Activated CD8-positive, alpha-beta T cell treated with anti-CD3 and anti-CD28 coated beads for 36 hours (primary cell): ENCODE measurements at regions of chr3 and their contacts with region 1.

Region 1: GRCh38 chr3:194472290-194472920 is 14.4 kb downstream of the ATP13A3 start:
- DNase-seq: peak; percentile 40
- ATAC-seq: peak; percentile 93
- H3K4me3 Mint-ChIP-seq: no peak overlapping the region
- H3K27ac Mint-ChIP-seq: no peak overlapping the region
- H3K4me1 Mint-ChIP-seq: peaks cover 21% of the 10 kb centered on the region
- H3K27me3 Mint-ChIP-seq: no peaks in the 10 kb centered on the region
- CTCF ChIP-seq: peak; percentile 97

Region 2: GRCh38 chr3:194458131-194458530 is 14.3 kb before region 1 on chr3:
- CTCF ChIA-PET with region 1: interaction called, 51 read pairs
- POLR2A ChIA-PET with region 1: no interaction called
- intact Hi-C with region 1: no loop called
- DNase-seq: no peak
- ATAC-seq: no peak
- H3K4me3 Mint-ChIP-seq: no peak overlapping the region
- H3K27ac Mint-ChIP-seq: no peak overlapping the region
- H3K4me1 Mint-ChIP-seq: no peaks in the 10 kb centered on the region
- H3K27me3 Mint-ChIP-seq: no peaks in the 10 kb centered on the region
- CTCF ChIP-seq: peak; percentile 34

Region 3: GRCh38 chr3:194486540-194487288 is 14.3 kb after region 1 on chr3 and contains the start of gene ATP13A3:
- CTCF ChIA-PET with region 1: interaction called, 44 read pairs
- POLR2A ChIA-PET with region 1: interaction called, 6 read pairs
- intact Hi-C with region 1: no loop called
- DNase-seq: peak; percentile 87
- ATAC-seq: peak; percentile 79
- H3K4me3 Mint-ChIP-seq: peak within 1 kb of the TSS; percentile 90
- H3K27ac Mint-ChIP-seq: peak within 1 kb of the TSS; percentile 95
- H3K4me1 Mint-ChIP-seq: peaks cover 54% of the 10 kb centered on the region
- H3K27me3 Mint-ChIP-seq: no peaks in the 10 kb centered on the region
- CTCF ChIP-seq: no peak
- total RNA-seq, gene ATP13A3: 101 to 110 TPM

Region 4: DNA sequence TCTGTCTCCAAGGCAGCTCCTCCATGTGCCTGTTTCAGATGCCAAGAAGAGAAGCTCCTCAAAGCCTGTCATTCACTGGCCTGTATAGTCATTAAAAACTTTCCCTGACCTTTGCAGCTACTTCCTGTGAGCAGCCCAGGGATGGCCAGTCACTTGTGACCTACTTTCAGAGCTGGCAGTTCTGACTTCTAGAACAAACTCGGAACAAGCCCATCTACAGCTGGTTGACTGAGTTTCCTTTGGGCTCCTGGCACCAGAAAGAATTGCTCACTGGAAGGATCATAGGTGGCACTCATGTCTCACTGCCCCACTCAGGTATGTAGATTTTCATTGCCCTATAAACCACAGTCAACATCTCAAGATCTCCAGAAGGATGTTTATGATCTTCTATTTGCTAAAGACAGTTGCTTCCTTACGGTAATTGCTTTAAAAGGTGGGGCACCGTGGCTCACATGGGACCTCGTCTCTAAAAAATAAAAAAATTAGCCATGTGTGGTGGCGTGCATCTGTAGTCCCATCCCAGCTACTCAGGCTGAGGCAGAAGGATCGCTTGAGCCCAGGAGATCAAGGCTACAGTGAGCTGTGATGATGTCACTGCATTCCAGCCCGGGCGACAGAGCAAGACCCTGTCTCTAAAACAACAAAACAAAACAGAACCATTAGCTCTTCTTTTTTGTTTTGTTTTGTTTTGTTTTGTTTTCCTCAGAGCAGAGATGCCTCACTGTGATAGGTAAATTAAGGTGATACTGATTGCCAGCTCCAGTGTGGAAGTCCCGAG is 25.6 kb after region 1 on chr3:
- CTCF ChIA-PET with region 1: interaction called, 12 read pairs
- POLR2A ChIA-PET with region 1: no interaction called
- intact Hi-C with region 1: no loop called
- DNase-seq: peak; percentile 9
- ATAC-seq: peak; percentile 77
- H3K4me3 Mint-ChIP-seq: no peak overlapping the region
- H3K27ac Mint-ChIP-seq: no peak overlapping the region
- H3K4me1 Mint-ChIP-seq: peaks cover 8% of the 10 kb centered on the region
- H3K27me3 Mint-ChIP-seq: no peaks in the 10 kb centered on the region
- CTCF ChIP-seq: no peak

Region 5: GRCh38 chr3:194573691-194574437 is 101.5 kb after region 1 on chr3:
- CTCF ChIA-PET with region 1: interaction called, 47 read pairs
- POLR2A ChIA-PET with region 1: no interaction called
- intact Hi-C with region 1: loop called (anchors 5 kb)
- DNase-seq: peak; percentile 60
- ATAC-seq: peak; percentile 88
- H3K4me3 Mint-ChIP-seq: no peak overlapping the region
- H3K27ac Mint-ChIP-seq: no peak overlapping the region
- H3K4me1 Mint-ChIP-seq: peaks cover 10% of the 10 kb centered on the region
- H3K27me3 Mint-ChIP-seq: peaks cover 26% of the 10 kb centered on the region
- CTCF ChIP-seq: peak; percentile 53

Region 6: GRCh38 chr3:194583604-194584318 is 111.4 kb after region 1 on chr3:
- CTCF ChIA-PET with region 1: interaction called, 31 read pairs
- POLR2A ChIA-PET with region 1: interaction called, 3 read pairs
- intact Hi-C with region 1: no loop called
- DNase-seq: peak; percentile 92
- ATAC-seq: peak; percentile 93
- H3K4me3 Mint-ChIP-seq: peak overlapping the region; percentile 97
- H3K27ac Mint-ChIP-seq: peak overlapping the region; percentile 97
- H3K4me1 Mint-ChIP-seq: peaks cover 20% of the 10 kb centered on the region
- H3K27me3 Mint-ChIP-seq: no peaks in the 10 kb centered on the region
- CTCF ChIP-seq: no peak

Region 7: DNA sequence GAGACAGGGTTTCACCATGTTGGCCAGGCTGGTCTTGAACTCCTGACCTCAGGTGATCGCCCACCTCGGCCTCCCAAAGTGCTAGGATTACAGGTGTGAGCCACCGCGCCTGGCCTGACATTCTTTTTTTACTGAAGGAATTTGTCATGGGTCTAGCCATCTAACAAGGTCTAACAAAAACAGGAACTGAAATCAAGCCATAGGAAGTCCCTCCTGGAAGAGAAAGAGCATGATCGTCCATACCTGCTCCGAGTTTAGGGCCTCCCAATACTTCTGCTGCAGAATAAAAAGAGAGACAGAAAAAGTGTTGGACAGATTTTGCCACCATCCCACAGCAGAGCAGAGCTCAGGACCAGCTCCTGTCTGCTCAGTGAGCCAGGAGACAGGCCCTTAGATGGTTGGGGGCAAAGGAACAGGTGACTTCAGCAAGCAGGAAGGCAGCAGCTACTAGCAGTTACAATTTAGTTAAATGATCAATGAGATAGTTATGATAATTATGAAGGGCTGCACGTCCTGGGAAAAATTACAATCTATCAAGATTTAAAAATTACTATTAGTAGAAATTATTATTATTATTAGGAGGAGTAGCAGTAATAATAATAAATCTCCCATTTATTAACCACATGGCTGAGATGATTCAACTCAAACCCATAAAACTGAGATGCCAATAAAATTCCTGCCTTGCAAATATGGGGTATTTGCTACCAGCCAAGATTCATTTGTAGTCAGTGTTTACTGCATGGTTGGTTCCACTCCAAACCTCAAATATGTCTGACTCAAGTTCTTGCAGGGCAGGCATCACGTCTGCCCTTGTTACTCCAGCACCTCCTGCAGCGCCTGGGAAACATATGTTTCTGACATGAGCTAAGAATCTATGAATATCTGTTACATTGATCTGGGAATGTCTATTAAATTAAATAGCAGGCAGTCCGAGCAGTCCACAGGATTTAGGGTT is 120.7 kb after region 1 on chr3:
- CTCF ChIA-PET with region 1: interaction called, 51 read pairs
- POLR2A ChIA-PET with region 1: interaction called, 3 read pairs
- intact Hi-C with region 1: loop called (anchors 2 kb)
- DNase-seq: no peak
- ATAC-seq: no peak
- H3K4me3 Mint-ChIP-seq: no peak overlapping the region
- H3K27ac Mint-ChIP-seq: no peak overlapping the region
- H3K4me1 Mint-ChIP-seq: peaks cover 3% of the 10 kb centered on the region
- H3K27me3 Mint-ChIP-seq: no peaks in the 10 kb centered on the region
- CTCF ChIP-seq: no peak

Region 8: DNA sequence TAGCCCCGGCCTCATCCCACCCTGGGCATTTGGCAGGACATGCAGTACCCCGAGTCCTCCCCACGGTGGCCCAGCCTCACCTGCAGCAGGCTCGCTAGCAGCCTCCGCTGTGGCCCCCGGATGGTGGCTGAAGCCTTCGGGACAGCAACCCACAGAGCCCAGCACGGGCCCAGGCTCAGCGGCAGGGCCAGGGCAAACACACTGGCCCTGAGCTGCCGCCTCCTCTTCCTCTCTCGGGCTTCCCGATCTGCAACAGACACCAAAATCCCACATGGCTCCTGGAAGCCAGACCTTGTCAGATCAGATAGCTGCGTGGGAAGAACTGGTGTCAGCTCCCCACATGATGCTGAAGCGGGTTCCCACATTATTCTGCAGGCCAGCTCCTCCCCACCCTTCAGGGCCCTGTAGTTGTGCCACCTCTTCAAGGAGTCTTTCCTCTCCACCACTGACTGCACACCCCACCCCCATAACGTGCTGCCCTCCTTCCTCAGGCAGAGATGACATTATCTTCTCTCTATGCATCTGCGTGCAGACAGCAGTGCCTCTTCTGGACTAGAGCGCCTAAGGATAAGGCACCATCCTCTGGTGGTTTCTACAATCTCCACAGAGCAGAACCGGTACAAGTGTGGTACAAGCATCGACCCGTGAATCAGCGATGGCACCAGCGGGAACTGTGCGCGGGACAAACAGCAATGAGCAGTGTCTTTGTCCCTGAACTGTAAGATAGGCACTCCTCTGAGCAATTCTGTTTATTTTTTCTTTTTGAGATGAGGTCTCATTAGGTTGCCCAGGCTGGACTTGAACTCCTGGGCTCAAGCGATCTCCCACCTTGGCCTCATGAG is 151.3 kb after region 1 on chr3:
- CTCF ChIA-PET with region 1: no interaction called
- POLR2A ChIA-PET with region 1: no interaction called
- intact Hi-C with region 1: no loop called
- DNase-seq: no peak
- ATAC-seq: no peak
- H3K4me3 Mint-ChIP-seq: no peak overlapping the region
- H3K27ac Mint-ChIP-seq: no peak overlapping the region
- H3K4me1 Mint-ChIP-seq: no peaks in the 10 kb centered on the region
- H3K27me3 Mint-ChIP-seq: no peaks in the 10 kb centered on the region
- CTCF ChIP-seq: no peak